ENCODE measurements at regions of chr5 and their contacts with region 1.

Region 1: DNA sequence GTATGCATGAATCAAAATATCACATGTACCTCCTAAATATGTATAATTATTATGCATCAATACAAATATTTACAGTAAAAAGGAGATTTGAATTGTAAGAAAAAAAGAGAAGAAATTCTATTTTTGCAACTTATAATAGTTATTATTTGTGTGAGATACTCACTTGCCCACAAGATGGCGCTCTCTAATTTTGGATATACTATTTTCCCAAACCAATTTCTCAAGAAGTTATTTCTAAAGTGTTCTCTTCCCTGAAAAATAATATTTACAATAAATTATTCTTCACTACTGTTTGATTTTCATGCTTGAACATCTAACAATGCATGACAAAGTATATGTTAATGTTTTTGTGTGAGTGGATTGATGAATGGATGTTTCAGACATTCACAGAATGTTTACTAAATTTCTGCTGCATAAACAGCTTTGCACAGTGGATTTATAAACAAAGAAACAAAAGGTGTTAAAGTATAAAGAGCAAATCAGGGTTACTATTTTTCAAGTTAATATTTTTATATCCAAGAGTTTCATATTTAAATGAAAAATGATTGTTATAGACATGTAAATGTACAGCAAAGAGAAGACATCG is 503.4 kb downstream of the PDE4D start:
- DNase-seq: no peak
- ATAC-seq: no peak
- H3K4me3 ChIP-seq: no peak overlapping the region
- H3K27ac ChIP-seq: no peak overlapping the region
- H3K4me1 ChIP-seq: no peaks in the 10 kb centered on the region
- H3K27me3 ChIP-seq: no peaks in the 10 kb centered on the region

Region 2: DNA sequence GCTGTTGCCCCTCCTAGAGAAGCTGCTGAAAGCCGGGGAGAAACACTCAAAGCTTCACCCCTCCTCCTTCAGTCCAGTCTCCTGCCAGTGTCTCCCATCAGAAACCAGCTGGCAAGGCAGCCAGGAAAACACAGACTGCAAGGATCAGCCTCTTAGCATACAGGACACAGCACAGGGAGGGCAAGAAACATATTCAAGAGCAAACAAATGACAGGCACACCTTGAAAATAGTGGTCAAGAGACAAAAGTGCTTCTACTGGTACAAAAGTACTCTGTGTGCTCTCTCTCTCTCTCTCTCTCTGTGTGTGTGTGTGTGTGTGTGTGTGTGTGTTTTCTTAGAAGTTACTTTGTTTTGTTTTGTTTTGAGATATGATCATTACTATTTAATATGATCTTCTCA is 580.1 kb before region 1 on chr5:
- intact Hi-C with region 1: no loop called
- DNase-seq: no peak
- ATAC-seq: no peak
- H3K4me3 ChIP-seq: no peak overlapping the region
- H3K27ac ChIP-seq: no peak overlapping the region
- H3K4me1 ChIP-seq: no peaks in the 10 kb centered on the region
- H3K27me3 ChIP-seq: no peaks in the 10 kb centered on the region

Region 3: GRCh38 chr5:59496524-59497134 is 106.5 kb after region 1 on chr5:
- intact Hi-C with region 1: loop called in 1 of 4 experiments (anchors 5 kb)
- DNase-seq: peak in 1 of 3 donors; percentile 19
- ATAC-seq: no peak
- H3K4me3 ChIP-seq: no peak overlapping the region
- H3K27ac ChIP-seq: no peak overlapping the region
- H3K4me1 ChIP-seq: no peaks in the 10 kb centered on the region
- H3K27me3 ChIP-seq: no peaks in the 10 kb centered on the region

Region 4: GRCh38 chr5:59673438-59674058 is 283.4 kb after region 1 on chr5:
- intact Hi-C with region 1: loop called in 3 of 4 experiments (anchors 5 kb)
- DNase-seq: no peak
- ATAC-seq: no peak
- H3K4me3 ChIP-seq: no peak overlapping the region
- H3K27ac ChIP-seq: no peak overlapping the region
- H3K4me1 ChIP-seq: no peaks in the 10 kb centered on the region
- H3K27me3 ChIP-seq: no peaks in the 10 kb centered on the region

Region 5: GRCh38 chr5:59712836-59713497 is 322.8 kb after region 1 on chr5:
- intact Hi-C with region 1: no loop called
- DNase-seq: no peak
- ATAC-seq: no peak
- H3K4me3 ChIP-seq: no peak overlapping the region
- H3K27ac ChIP-seq: no peak overlapping the region
- H3K4me1 ChIP-seq: no peaks in the 10 kb centered on the region
- H3K27me3 ChIP-seq: no peaks in the 10 kb centered on the region

Region 6: GRCh38 chr5:59799668-59800346 is 409.6 kb after region 1 on chr5:
- intact Hi-C with region 1: loop called in 3 of 4 experiments (anchors 5 kb)
- DNase-seq: no peak
- ATAC-seq: peak; percentile 73 to 74
- H3K4me3 ChIP-seq: peak overlapping the region; percentile 15
- H3K27ac ChIP-seq: no peak overlapping the region
- H3K4me1 ChIP-seq: peaks cover 2% of the 10 kb centered on the region
- H3K27me3 ChIP-seq: no peaks in the 10 kb centered on the region

Region 7: DNA sequence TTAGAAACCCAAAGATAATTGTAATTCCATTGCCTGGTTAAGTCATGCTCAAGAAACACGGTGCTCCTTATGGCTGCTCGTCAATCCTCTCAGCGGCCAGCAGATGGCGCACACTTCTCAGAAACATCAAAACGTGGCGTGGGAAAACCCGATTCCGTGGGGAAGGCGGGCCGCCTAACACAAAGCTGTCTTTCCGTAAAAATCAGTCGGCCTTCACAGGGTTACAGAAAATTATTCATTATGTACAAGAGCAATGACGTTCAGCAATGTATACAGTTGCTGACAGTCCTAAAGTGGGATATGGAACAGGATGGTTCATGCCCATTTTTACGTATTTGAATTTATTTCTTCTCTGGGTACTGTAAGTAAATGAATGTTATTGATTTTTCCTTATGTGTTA is 419.9 kb after region 1 on chr5:
- intact Hi-C with region 1: loop called in 1 of 4 experiments (anchors 5 kb)
- DNase-seq: peak; percentile 73 to 87 (median 86)
- ATAC-seq: peak; percentile 64 to 66
- H3K4me3 ChIP-seq: no peak overlapping the region
- H3K27ac ChIP-seq: no peak overlapping the region
- H3K4me1 ChIP-seq: no peaks in the 10 kb centered on the region
- H3K27me3 ChIP-seq: no peaks in the 10 kb centered on the region

Measured in right cardiac atrium (tissue), 5 donors.